ENCODE measurements at regions of chr1 and their contacts with region 1.

Region 1: GRCh38 chr1:16067127-16067768 is 6.2 kb downstream of the FAM131C start:
- DNase-seq: no peak
- H3K4me3 ChIP-seq: no peak overlapping the region
- H3K27ac ChIP-seq: no peak overlapping the region
- H3K4me1 ChIP-seq: no peaks in the 10 kb centered on the region
- H3K27me3 ChIP-seq: peaks cover 0 to 7% of the 10 kb centered on the region in 2 experiments
- CTCF ChIP-seq: no peak
- POLR2A ChIP-seq: no peak

Region 2: GRCh38 chr1:16038620-16038912 is 28.7 kb before region 1 on chr1:
- CTCF ChIA-PET with region 1: no interaction called
- POLR2A ChIA-PET with region 1: no interaction called
- dilution Hi-C with region 1: no loop called
- intact Hi-C with region 1: loop called (anchors 1 kb)
- DNase-seq: no peak
- H3K4me3 ChIP-seq: no peak overlapping the region
- H3K27ac ChIP-seq: no peak overlapping the region
- H3K4me1 ChIP-seq: no peaks in the 10 kb centered on the region
- H3K27me3 ChIP-seq: no peaks in the 10 kb centered on the region
- CTCF ChIP-seq: no peak
- POLR2A ChIP-seq: no peak

Region 3: GRCh38 chr1:16289963-16290362 is 222.7 kb after region 1 on chr1:
- CTCF ChIA-PET with region 1: no interaction called
- POLR2A ChIA-PET with region 1: no interaction called
- dilution Hi-C with region 1: no loop called
- intact Hi-C with region 1: no loop called
- DNase-seq: no peak
- H3K4me3 ChIP-seq: no peak overlapping the region
- H3K27ac ChIP-seq: no peak overlapping the region
- H3K4me1 ChIP-seq: peaks cover 6% of the 10 kb centered on the region
- H3K27me3 ChIP-seq: no peaks in the 10 kb centered on the region
- CTCF ChIP-seq: no peak
- POLR2A ChIP-seq: no peak

Region 4: GRCh38 chr1:16351994-16352841 is 285.0 kb after region 1 on chr1 and contains the start of gene FBXO42:
- CTCF ChIA-PET with region 1: no interaction called
- POLR2A ChIA-PET with region 1: no interaction called
- dilution Hi-C with region 1: no loop called
- intact Hi-C with region 1: no loop called
- DNase-seq: peak; percentile 96
- H3K4me3 ChIP-seq: peak within 1 kb of the TSS; percentile 66 to 88 (median 85)
- H3K27ac ChIP-seq: peak within 1 kb of the TSS; percentile 86
- H3K4me1 ChIP-seq: peaks cover 26% of the 10 kb centered on the region
- H3K27me3 ChIP-seq: no peaks in the 10 kb centered on the region
- CTCF ChIP-seq: peak; percentile 36 to 50
- POLR2A ChIP-seq: peak; percentile 80
- total RNA-seq, gene FBXO42: 16.3 and 17.3 TPM in 2 replicates

Measured in endothelial cell of umbilical vein (primary cell).